ENCODE measurements at regions of chr5 and their contacts with region 1.

Region 1: DNA sequence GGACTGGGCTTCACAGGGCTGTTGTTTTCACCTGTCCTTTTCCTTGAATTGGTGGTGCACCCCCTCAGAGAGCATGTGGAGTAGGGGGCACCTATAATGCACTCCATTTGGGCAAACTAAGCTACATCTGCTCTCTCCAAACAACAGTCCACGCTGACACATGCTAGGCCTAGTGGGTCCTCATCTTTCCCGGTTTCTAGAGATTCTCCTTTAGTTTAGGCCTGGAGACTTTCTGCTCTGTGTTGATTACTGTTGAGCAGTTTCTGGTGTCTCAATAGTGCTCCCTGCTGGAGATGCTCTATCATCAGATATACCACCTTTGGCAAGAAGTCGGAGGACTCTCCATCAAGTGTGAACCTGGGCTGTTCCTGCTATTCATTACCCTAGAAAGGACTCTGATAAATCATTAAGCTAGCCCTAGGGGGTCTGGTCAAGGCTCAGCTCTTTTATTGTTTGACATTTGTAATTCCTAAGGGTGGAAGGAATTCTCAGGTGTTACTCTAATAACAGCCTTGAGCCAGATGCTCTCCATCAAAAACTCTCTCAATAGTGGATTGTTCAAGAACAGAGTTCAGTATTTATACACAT is 64.0 kb upstream of the FYB1 start:
- DNase-seq: peak; percentile 65 to 83
- ATAC-seq: peak; percentile 98 to 100
- H3K4me3 ChIP-seq: no peak overlapping the region
- H3K27ac ChIP-seq: peak overlapping the region; percentile 65 to 79
- H3K4me1 ChIP-seq: peaks cover 12% of the 10 kb centered on the region; the same call in 1 of the 3 replicates
- CTCF ChIP-seq: peak; percentile 84
- EP300 ChIP-seq: no peak
- POLR2A ChIP-seq: no peak
- RAD21 ChIP-seq: peak; percentile 95 to 96

Region 2: GRCh38 chr5:39138892-39139291 is 144.4 kb before region 1 on chr5:
- CTCF ChIA-PET with region 1: interaction called, 20 read pairs
- POLR2A ChIA-PET with region 1: no interaction called
- DNase-seq: peak; percentile 51 to 88
- ATAC-seq: peak; percentile 87
- H3K4me3 ChIP-seq: no peak overlapping the region
- H3K27ac ChIP-seq: peak overlapping the region in 1 of 2 experiments; percentile 71; a peak in 3 of 6 replicates
- H3K4me1 ChIP-seq: peaks cover 39% of the 10 kb centered on the region
- CTCF ChIP-seq: no peak
- EP300 ChIP-seq: peak in 1 of 2 experiments; percentile 82; a peak in 1 of 5 replicates
- POLR2A ChIP-seq: no peak
- RAD21 ChIP-seq: peak; percentile 24 to 58; a peak in 4 of 5 replicates

Region 3: GRCh38 chr5:39194466-39195136 is 88.7 kb before region 1 on chr5:
- CTCF ChIA-PET with region 1: interaction called, 13 read pairs
- POLR2A ChIA-PET with region 1: no interaction called
- DNase-seq: peak; percentile 49 to 84
- ATAC-seq: peak; percentile 87 to 90
- H3K4me3 ChIP-seq: no peak overlapping the region
- H3K27ac ChIP-seq: peak overlapping the region; percentile 84 to 92
- H3K4me1 ChIP-seq: peaks cover 90% of the 10 kb centered on the region
- CTCF ChIP-seq: no peak
- EP300 ChIP-seq: peak; percentile 30 to 36; a peak in 2 of 5 replicates
- POLR2A ChIP-seq: no peak
- RAD21 ChIP-seq: no peak

Region 4: GRCh38 chr5:39224196-39224761 is 59.0 kb before region 1 on chr5:
- CTCF ChIA-PET with region 1: interaction called, 107 read pairs
- POLR2A ChIA-PET with region 1: no interaction called
- DNase-seq: peak in 1 of 2 experiments; percentile 58
- ATAC-seq: peak; percentile 78 to 84; a peak in 5 of 6 replicates
- H3K4me3 ChIP-seq: no peak overlapping the region
- H3K27ac ChIP-seq: peak overlapping the region in 1 of 2 experiments; percentile 49; a peak in 3 of 6 replicates
- H3K4me1 ChIP-seq: peaks cover 16% of the 10 kb centered on the region
- CTCF ChIP-seq: no peak
- EP300 ChIP-seq: no peak
- POLR2A ChIP-seq: no peak
- RAD21 ChIP-seq: no peak

Region 5: DNA sequence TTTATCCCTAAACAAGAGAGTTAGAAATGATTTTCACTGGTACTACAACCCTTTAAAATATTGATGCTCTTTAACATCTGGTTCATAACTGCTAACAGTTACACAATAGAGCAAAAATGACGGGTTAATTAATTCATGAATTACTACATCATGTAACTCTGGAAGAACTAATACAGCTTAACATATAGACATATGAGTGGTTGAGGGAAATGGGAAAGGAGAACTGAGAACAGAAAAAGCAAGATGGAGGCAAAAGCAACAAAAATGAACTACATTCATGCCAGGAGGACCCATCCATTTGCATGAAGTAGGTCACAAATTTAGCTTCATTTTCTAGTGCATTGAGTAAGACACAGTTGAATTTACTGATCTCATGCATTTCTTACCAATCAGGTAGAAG is 19.1 kb after region 1 on chr5:
- CTCF ChIA-PET with region 1: interaction called, 10 read pairs
- POLR2A ChIA-PET with region 1: no interaction called
- DNase-seq: no peak
- ATAC-seq: no peak
- H3K4me3 ChIP-seq: no peak overlapping the region
- H3K27ac ChIP-seq: no peak overlapping the region
- H3K4me1 ChIP-seq: no peaks in the 10 kb centered on the region
- CTCF ChIP-seq: no peak
- EP300 ChIP-seq: no peak
- POLR2A ChIP-seq: no peak
- RAD21 ChIP-seq: no peak

Region 6: GRCh38 chr5:39432696-39433533 is 149.6 kb after region 1 on chr5:
- CTCF ChIA-PET with region 1: no interaction called
- POLR2A ChIA-PET with region 1: no interaction called
- DNase-seq: no peak
- ATAC-seq: peak in 1 of 2 experiments; percentile 47; a peak in 2 of 6 replicates
- H3K4me3 ChIP-seq: no peak overlapping the region
- H3K27ac ChIP-seq: peak overlapping the region in 1 of 2 experiments; percentile 37; a peak in 2 of 6 replicates
- H3K4me1 ChIP-seq: peaks cover 22% of the 10 kb centered on the region; the same call in 2 of the 3 replicates
- CTCF ChIP-seq: no peak
- EP300 ChIP-seq: no peak
- POLR2A ChIP-seq: no peak
- RAD21 ChIP-seq: no peak